Dendritic cell treated with granulocyte-macrophage colony-stimulating factor and Interleukin-4, amounts not matched to agents 40 ng/mL and 50 ng/mL, for 4 days (primary cell): ENCODE measurements at regions of chr7 and their contacts with region 1.

Region 1: DNA sequence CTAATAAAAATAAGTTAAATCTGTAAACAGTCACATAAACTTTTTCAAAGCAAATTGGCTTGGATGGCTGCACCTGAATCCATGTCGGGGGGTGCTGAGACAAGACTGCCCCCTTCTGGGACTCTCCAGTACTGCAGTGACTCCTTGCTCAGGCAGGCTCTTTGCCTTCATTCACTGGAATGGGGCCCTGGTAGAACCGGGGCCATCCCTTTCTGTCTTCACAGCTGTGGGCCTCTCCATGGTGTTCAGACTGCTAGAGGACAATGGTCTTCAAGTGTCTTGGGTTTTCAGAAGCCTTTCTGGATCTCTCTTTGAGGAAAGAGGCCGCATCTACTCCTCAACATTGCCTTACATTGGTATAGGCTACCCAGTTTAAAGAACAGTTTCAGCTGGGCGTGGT is 16.1 kb upstream of the IMPDH1 start:
- H3K4me3 Mint-ChIP-seq: no peak overlapping the region
- H3K27ac Mint-ChIP-seq: no peak overlapping the region
- H3K4me1 Mint-ChIP-seq: peaks cover 18% of the 10 kb centered on the region
- H3K27me3 Mint-ChIP-seq: no peaks in the 10 kb centered on the region

Region 2: GRCh38 chr7:128172147-128172546 is 253.7 kb before region 1 on chr7:
- intact Hi-C with region 1: no loop called
- H3K4me3 Mint-ChIP-seq: no peak overlapping the region
- H3K27ac Mint-ChIP-seq: no peak overlapping the region
- H3K4me1 Mint-ChIP-seq: peaks cover 45% of the 10 kb centered on the region
- H3K27me3 Mint-ChIP-seq: peaks cover 70% of the 10 kb centered on the region

Region 3: GRCh38 chr7:128343554-128344430 is 82.1 kb before region 1 on chr7 and contains the start of gene RBM28:
- intact Hi-C with region 1: loop called (anchors 1 kb)
- H3K4me3 Mint-ChIP-seq: peak within 1 kb of the TSS; percentile 95
- H3K27ac Mint-ChIP-seq: peak within 1 kb of the TSS; percentile 97
- H3K4me1 Mint-ChIP-seq: peaks cover 14% of the 10 kb centered on the region
- H3K27me3 Mint-ChIP-seq: peaks cover 7% of the 10 kb centered on the region

Region 4: GRCh38 chr7:128387216-128388144 is 38.4 kb before region 1 on chr7:
- intact Hi-C with region 1: loop called (anchors 5 kb)
- H3K4me3 Mint-ChIP-seq: no peak overlapping the region
- H3K27ac Mint-ChIP-seq: no peak overlapping the region
- H3K4me1 Mint-ChIP-seq: peaks cover 23% of the 10 kb centered on the region
- H3K27me3 Mint-ChIP-seq: peaks cover 6% of the 10 kb centered on the region

Region 5: DNA sequence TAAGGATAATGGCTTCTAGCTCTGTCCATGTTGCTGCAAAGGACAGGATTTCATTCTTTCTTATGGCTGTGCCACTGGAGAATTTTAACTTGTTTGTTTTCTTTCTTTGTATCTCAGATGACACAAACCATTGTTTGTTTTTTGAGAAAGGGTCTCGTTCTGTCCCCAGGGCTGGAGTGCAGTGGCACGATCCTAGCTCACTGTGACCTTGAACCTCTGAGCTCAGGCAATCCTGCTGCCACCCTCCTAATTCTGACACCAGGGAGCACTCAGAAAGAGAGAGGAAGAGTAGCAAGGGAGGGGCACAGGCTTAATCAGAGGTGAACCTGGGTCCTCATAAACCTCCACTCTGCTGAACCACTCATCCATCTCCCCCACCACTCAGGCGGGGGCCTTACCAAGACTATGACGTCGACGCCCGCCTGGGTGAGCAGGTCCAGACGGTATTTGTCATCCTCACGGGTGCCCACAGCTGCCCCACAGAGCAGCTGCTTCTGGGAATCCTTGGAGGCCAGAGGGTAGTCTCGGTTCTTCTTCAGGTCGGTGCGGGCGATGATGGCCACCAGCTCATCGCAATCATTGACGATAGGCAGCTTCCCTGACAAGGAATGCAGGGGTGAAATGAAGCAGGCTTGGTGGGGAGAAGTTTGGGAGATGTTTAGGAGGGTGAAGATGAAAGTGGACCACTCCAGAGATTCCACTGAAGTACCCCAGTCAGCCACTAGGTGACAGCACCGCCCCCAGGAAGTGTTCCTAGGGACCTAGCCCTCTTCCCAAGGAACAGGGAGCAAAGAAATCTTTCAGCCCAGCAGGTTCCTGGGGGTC is 27.6 kb before region 1 on chr7:
- intact Hi-C with region 1: loop called (anchors 1 kb)
- H3K4me3 Mint-ChIP-seq: no peak overlapping the region
- H3K27ac Mint-ChIP-seq: no peak overlapping the region
- H3K4me1 Mint-ChIP-seq: peaks cover 13% of the 10 kb centered on the region
- H3K27me3 Mint-ChIP-seq: no peaks in the 10 kb centered on the region

Region 6: GRCh38 chr7:128455551-128456254 is 29.9 kb after region 1 on chr7 and contains the start of gene HILPDA:
- intact Hi-C with region 1: loop called (anchors 1 kb)
- H3K4me3 Mint-ChIP-seq: peak within 1 kb of the TSS; percentile 90
- H3K27ac Mint-ChIP-seq: peak within 1 kb of the TSS; percentile 93
- H3K4me1 Mint-ChIP-seq: peaks cover 48% of the 10 kb centered on the region
- H3K27me3 Mint-ChIP-seq: no peaks in the 10 kb centered on the region